ENCODE measurements at regions of chr2 and their contacts with region 1.

Region 1: DNA sequence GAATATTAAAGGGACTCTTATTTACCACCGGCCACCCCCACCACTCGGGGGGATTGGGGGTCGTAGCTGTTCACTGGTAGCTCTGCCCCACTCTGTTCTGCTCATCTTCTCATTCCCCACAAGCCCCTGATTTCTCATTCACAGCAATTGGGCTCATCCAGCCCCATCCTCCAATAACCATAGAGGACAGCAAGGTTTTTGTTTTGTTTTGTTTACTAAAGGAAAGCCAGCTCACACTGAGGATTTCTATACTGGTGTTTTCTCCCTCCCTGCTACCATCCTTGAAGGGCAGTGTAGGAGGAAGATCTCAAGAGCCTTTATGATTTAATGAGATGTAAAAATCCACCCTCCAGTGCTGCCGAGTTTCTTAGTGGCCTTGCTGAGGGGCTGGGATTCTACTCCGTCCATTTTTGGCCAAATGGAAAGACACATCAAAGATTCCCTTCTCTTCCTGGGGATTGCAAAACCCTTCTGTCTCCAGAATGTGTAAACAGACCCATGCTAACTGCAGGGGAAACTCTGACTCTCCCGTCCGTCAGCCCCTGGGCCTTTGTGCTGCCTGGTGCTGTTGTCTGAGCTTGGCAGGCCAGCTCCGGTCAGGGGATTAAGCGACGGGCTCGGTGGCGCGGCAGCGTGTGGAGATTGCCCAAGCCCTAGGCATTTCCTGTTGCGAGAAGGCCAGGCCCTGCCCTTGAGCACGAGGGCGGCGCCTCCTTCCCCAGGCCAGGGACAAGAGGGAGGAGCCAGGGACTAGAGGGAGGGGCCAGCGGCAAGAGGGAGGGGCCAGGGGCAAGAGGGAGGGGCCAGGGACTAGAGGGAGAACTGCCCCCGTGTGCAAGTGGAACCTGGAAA is 165.0 kb downstream of the ANTXR1 start:
- DNase-seq: peak; percentile 93 to 98
- H3K4me3 ChIP-seq: peak overlapping the region in 3 of 4 experiments; percentile 9 to 47 (median 20); a peak in 3 of 8 replicates
- H3K27ac ChIP-seq: peak overlapping the region; percentile 87
- H3K4me1 ChIP-seq: peaks cover 8 to 21% (median 14%) of the 10 kb centered on the region in 4 experiments
- H3K27me3 ChIP-seq: no peaks in the 10 kb centered on the region
- CTCF ChIP-seq: no peak
- EP300 ChIP-seq: no peak
- POLR2A ChIP-seq: peak; percentile 90
- RAD21 ChIP-seq: peak in 1 of 2 experiments; percentile 9; a peak in 2 of 4 replicates

Region 2: DNA sequence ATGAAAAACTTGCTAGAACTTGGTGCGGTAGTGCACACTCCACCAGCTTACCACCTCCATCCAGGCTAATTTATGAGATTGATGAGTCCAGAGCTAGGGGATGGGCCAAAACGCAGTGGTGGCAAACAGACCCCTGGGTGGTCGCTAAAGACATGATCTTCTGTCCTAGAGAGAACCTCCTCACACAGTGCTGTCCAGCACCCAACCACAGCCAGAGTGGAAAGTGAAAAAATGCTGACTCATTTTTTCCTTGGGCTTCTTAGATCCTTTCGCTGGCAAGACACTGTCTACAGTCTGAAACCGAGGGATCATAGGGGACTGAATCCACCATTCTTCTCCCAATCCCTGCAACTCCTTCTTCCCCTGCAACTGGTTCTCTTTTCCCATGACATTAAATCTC is 160.9 kb before region 1 on chr2:
- CTCF ChIA-PET with region 1: no interaction called
- POLR2A ChIA-PET with region 1: no interaction called
- DNase-seq: no peak
- H3K4me3 ChIP-seq: no peak overlapping the region
- H3K27ac ChIP-seq: no peak overlapping the region
- H3K4me1 ChIP-seq: peaks cover 3 to 11% (median 5%) of the 10 kb centered on the region in 4 experiments; a peak in 3 of 7 replicates
- H3K27me3 ChIP-seq: peaks cover 0 to 4% (median 2%) of the 10 kb centered on the region in 4 experiments; a peak in 4 of 7 replicates
- CTCF ChIP-seq: no peak
- EP300 ChIP-seq: no peak
- POLR2A ChIP-seq: no peak
- RAD21 ChIP-seq: no peak

Region 3: GRCh38 chr2:69192176-69192945 is 14.3 kb after region 1 on chr2:
- CTCF ChIA-PET with region 1: interaction called, 5 read pairs
- POLR2A ChIA-PET with region 1: interaction called, 11 read pairs
- DNase-seq: no peak
- H3K4me3 ChIP-seq: no peak overlapping the region
- H3K27ac ChIP-seq: no peak overlapping the region
- H3K4me1 ChIP-seq: peaks cover 0 to 4% (median 0%) of the 10 kb centered on the region in 4 experiments; a peak in 4 of 7 replicates
- H3K27me3 ChIP-seq: no peaks in the 10 kb centered on the region
- CTCF ChIP-seq: peak in 1 of 3 experiments; percentile 27; a peak in 2 of 4 replicates
- EP300 ChIP-seq: no peak
- POLR2A ChIP-seq: no peak
- RAD21 ChIP-seq: peak in 1 of 2 experiments; percentile 27; a peak in 1 of 4 replicates

Region 4: DNA sequence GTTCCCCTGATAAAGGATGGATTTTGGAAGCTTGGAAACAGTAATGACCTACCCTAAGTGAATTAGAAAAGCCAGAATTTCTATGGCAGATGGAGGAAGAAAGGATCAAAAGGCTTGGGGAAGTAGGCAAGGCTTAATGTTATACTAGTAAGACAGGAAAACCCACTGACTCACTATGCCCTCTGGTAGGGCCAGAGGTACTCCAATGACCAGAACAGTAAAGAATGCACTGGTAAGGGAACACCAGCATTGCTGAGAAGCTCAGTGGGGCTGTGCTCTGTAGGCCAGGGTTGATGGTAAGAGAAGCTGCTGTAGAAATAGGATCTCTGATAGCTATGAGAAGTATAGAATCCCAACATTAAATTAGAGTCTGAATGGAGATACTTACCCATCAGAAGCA is 82.7 kb after region 1 on chr2:
- CTCF ChIA-PET with region 1: no interaction called
- POLR2A ChIA-PET with region 1: no interaction called
- DNase-seq: no peak
- H3K4me3 ChIP-seq: no peak overlapping the region
- H3K27ac ChIP-seq: no peak overlapping the region
- H3K4me1 ChIP-seq: no peaks in the 10 kb centered on the region
- H3K27me3 ChIP-seq: no peaks in the 10 kb centered on the region
- CTCF ChIP-seq: no peak
- EP300 ChIP-seq: no peak
- POLR2A ChIP-seq: no peak
- RAD21 ChIP-seq: no peak